ENCODE measurements at regions of chr12 and their contacts with region 1.

Region 1: DNA sequence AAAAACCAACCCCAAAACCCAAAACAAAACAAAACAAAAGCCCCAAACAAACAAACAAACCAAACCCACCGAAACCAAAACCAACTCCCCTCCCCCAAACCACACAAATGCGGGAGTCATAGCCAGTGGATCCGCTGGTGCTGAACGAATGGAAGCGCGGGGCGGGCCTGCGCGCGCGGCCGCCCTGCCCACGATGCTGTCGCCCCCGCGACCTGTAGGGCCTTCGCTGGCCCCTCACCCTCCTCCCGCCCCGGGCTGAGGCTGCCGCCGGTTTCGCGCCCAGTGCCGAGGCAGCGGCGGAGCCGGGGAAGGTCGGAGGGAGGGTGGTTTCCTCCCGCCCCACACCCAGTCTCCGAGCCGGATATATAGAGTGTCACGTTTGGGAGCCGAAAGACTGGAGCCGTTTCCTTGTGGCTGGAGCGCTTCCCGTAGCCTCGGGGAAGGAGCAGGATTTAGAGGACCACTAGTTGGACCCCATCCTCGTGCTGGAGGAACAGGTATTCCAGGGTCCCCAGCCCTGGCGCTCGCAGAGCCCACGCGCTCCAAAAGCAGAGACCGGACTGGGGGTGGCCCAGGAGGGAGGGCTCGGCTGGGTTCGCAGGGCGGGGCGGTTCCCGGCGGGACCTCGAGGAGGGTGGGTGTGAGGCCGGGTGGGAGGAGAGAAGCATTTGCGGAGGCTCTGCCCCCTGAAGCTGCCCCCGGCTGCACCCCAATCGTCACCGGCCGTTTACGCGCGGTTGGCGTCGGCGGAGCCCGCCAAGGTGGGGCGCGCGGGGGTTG is at the start of gene FAR2:
- DNase-seq: peak; percentile 65
- H3K4me3 Mint-ChIP-seq: peak within 1 kb of the TSS; percentile 95
- H3K27ac Mint-ChIP-seq: peak within 1 kb of the TSS; percentile 84
- H3K4me1 Mint-ChIP-seq: peaks cover 38% of the 10 kb centered on the region
- H3K27me3 Mint-ChIP-seq: peaks cover 13% of the 10 kb centered on the region
- total RNA-seq, gene FAR2: 19.1 to 19.9 TPM

Region 2: DNA sequence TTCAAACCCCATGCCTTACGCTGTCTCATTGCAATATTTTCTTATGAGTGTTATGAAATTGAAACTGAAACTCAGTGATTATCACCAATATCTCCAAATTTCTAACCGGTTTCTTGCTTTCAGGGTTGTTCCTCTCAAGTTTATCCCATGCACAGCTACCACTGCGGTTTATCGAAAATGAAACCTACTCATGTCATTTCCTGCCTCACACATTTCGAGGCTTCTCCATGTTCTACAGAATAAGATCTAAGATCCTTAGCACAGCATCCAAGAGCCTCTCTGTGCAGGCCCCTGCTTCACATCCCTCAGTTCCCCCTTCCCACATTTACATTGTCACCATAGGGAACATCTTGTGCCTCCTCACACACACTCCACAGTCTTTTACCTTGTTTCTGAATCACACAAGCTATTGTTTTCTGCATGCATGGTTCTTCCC is 45.5 kb before region 1 on chr12:
- CTCF ChIA-PET with region 1: interaction called, 3 read pairs
- POLR2A ChIA-PET with region 1: interaction called, 31 read pairs
- DNase-seq: peak; percentile 68
- H3K4me3 Mint-ChIP-seq: peak overlapping the region; percentile 50
- H3K27ac Mint-ChIP-seq: peak overlapping the region; percentile 93
- H3K4me1 Mint-ChIP-seq: peaks cover 36% of the 10 kb centered on the region
- H3K27me3 Mint-ChIP-seq: peaks cover 6% of the 10 kb centered on the region

Measured in activated CD4-positive, alpha-beta memory T cell treated with anti-CD3 and anti-CD28 coated beads, Interleukin-2, amount 10 ng/mL, durations not matched to agents 7 days and 5 days (primary cell).